ENCODE measurements at regions of chr10 and their contacts with region 1.

Region 1: DNA sequence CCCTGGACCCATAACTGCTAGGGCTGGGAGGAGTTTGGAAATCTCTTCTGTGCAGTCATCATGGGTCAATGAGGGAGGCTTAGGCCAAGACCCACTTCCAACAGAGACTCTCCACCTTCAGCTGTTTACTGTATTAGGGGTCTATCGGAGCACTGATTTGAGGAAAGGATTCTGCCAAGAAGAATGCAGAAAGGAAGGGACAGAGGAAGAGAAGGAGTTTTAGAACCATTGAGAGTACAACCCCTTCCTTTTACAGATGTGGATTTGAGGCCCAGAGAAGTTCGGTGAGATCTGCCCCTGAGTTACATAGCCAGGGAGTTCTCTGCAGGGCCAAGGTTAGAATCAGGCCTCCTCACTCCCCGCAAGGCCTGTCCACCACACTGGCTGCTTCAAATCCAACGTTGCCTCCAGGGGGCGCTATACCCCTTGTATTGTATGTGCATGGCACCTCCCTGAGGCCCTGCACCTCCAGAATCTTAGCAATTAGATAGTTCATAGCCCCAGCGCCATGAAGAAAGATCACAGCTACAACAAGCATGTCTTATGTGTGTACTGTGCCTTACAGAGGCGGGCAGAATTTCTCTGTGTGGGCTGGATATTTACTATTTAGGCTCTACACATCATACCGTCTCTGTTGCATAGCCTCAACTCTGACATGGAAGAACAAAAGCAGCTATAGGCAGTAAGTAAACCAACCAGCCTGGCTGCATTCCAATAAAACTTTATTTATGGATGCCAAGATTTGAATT is 246.8 kb downstream of the SKIDA1 start:
- DNase-seq: peak; percentile 91 to 96 (median 95)
- ATAC-seq: peak; percentile 95 to 99 (median 98)
- H3K4me3 ChIP-seq: no peak overlapping the region
- H3K27ac ChIP-seq: peak overlapping the region in 3 of 12 donors; percentile 13 to 51 (median 14)
- H3K4me1 ChIP-seq: peaks cover 0 to 6% (median 3%) of the 10 kb centered on the region in 12 donors
- H3K27me3 ChIP-seq: no peaks in the 10 kb centered on the region
- CTCF ChIP-seq: peak; percentile 81 to 91 (median 82)
- POLR2A ChIP-seq: no peak

Region 2: GRCh38 chr10:20858292-20859124 is 420.2 kb before region 1 on chr10:
- intact Hi-C with region 1: loop called in 2 of 10 experiments (anchors 5 to 10 kb)
- DNase-seq: no peak
- ATAC-seq: no peak
- H3K4me3 ChIP-seq: no peak overlapping the region
- H3K27ac ChIP-seq: no peak overlapping the region
- H3K4me1 ChIP-seq: peaks cover 0 to 22% (median 3%) of the 10 kb centered on the region in 12 donors
- H3K27me3 ChIP-seq: no peaks in the 10 kb centered on the region
- CTCF ChIP-seq: peak; percentile 18 to 58 (median 44)
- POLR2A ChIP-seq: no peak

Region 3: DNA sequence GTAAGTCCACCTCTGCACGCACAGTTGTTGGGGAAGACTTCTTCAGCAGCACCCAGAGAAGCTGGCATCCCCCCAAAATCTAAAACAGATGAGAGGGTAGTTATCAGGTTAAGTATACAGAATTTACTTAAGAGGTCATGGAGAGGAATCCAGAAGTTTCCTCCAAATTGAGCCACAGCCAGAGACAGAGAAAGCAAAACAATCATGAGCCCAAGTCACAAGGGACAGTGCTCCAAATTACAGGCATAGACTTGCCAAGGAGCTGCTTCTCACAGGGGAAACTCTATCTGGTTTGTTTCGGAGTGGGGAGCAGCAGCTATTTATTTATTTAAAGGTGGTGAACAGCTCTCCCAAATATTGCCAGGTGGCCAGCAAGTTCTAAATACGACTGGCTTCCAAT is 61.6 kb before region 1 on chr10:
- intact Hi-C with region 1: no loop called
- DNase-seq: no peak
- ATAC-seq: no peak
- H3K4me3 ChIP-seq: no peak overlapping the region
- H3K27ac ChIP-seq: no peak overlapping the region
- H3K4me1 ChIP-seq: peaks cover 0 to 6% (median 0%) of the 10 kb centered on the region in 12 donors
- H3K27me3 ChIP-seq: no peaks in the 10 kb centered on the region
- CTCF ChIP-seq: no peak
- POLR2A ChIP-seq: no peak

Region 4: DNA sequence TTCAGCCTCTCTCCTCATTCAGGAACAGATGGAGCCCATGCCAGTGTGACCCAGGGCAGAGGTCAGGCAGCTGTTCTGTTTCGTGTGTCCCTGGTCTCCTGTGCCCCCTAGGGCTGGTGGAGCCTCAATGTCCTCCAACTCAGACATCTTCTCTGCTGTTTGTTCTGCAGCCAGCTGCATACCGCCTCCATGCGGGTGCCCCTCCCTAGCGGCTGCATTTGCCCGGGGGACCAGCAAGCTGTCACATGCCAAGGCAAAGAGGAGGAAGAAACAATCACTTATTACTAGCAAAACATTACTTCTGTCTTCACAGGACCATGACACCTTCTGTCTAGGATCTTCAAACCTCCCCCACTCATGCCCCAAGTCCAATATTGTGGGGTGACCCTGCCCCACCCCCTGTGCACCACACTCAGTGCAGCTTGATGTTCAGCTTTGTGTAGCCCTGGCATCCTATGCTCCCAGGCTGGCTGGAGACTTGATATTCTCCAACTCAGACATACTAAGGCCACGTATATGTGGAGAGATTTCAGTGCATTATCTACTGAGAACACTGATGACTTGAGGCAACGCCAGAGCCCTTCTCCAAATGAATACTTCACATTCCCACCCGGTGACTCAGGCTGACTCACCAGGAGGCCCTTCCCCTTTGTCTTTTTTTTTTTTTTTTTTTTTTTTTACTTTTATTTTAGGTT is 58.0 kb after region 1 on chr10:
- intact Hi-C with region 1: loop called in 2 of 10 experiments (anchors 5 to 10 kb)
- DNase-seq: peak; percentile 59 to 82 (median 63)
- ATAC-seq: peak; percentile 75 to 91 (median 82)
- H3K4me3 ChIP-seq: no peak overlapping the region
- H3K27ac ChIP-seq: peak overlapping the region in 9 of 12 donors; percentile 18 to 68 (median 46)
- H3K4me1 ChIP-seq: peaks cover 0 to 25% (median 14%) of the 10 kb centered on the region in 12 donors
- H3K27me3 ChIP-seq: no peaks in the 10 kb centered on the region
- CTCF ChIP-seq: peak in 5 of 12 donors; percentile 9 to 17 (median 16)
- POLR2A ChIP-seq: no peak

Region 5: GRCh38 chr10:21953585-21954057 is 675.0 kb after region 1 on chr10:
- intact Hi-C with region 1: loop called in 5 of 10 experiments (anchors 5 to 10 kb)
- DNase-seq: no peak
- ATAC-seq: peak in 3 of 4 donors; percentile 42 to 69 (median 58)
- H3K4me3 ChIP-seq: no peak overlapping the region
- H3K27ac ChIP-seq: no peak overlapping the region
- H3K4me1 ChIP-seq: peaks cover 0 to 18% (median 3%) of the 10 kb centered on the region in 12 donors
- H3K27me3 ChIP-seq: no peaks in the 10 kb centered on the region
- CTCF ChIP-seq: peak; percentile 32 to 60 (median 40)
- POLR2A ChIP-seq: no peak

Region 6: DNA sequence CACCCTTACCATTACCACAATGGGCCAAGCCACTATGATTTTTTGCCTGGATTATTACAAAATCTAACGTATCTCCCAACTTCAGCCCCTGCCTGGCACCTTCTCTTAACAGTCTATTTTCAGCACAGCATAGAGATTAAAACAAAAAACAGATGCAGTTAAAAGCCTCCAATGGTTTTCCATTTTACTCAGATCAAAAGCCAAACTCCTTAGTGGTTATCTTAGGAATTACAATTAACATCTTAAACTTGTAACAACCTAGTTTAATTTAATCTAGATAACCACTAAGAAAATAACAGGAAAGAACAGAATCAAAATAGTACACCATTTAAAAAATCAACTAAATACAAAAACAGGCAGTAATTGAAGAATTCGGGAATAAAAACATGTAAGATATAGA is 681.3 kb after region 1 on chr10:
- intact Hi-C with region 1: loop called in 4 of 10 experiments (anchors 5 to 10 kb)
- DNase-seq: no peak
- ATAC-seq: no peak
- H3K4me3 ChIP-seq: no peak overlapping the region
- H3K27ac ChIP-seq: no peak overlapping the region
- H3K4me1 ChIP-seq: peaks cover 0 to 8% (median under 1%) of the 10 kb centered on the region in 12 donors
- H3K27me3 ChIP-seq: no peaks in the 10 kb centered on the region
- CTCF ChIP-seq: peak in 2 of 12 donors; percentile 39 to 43
- POLR2A ChIP-seq: no peak

Measured in heart left ventricle (tissue), 16 donors.